ENCODE measurements at regions of chr17 and their contacts with region 1.

Region 1: GRCh38 chr17:10295728-10296343 is 77.0 kb downstream of the MYH13 start:
- DNase-seq: no peak
- H3K4me3 ChIP-seq: no peak overlapping the region
- H3K27ac ChIP-seq: no peak overlapping the region
- H3K4me1 ChIP-seq: no peaks in the 10 kb centered on the region
- H3K27me3 ChIP-seq: no peaks in the 10 kb centered on the region
- CTCF ChIP-seq: peak in 2 of 3 donors; percentile 41 to 58
- POLR2A ChIP-seq: no peak

Region 2: DNA sequence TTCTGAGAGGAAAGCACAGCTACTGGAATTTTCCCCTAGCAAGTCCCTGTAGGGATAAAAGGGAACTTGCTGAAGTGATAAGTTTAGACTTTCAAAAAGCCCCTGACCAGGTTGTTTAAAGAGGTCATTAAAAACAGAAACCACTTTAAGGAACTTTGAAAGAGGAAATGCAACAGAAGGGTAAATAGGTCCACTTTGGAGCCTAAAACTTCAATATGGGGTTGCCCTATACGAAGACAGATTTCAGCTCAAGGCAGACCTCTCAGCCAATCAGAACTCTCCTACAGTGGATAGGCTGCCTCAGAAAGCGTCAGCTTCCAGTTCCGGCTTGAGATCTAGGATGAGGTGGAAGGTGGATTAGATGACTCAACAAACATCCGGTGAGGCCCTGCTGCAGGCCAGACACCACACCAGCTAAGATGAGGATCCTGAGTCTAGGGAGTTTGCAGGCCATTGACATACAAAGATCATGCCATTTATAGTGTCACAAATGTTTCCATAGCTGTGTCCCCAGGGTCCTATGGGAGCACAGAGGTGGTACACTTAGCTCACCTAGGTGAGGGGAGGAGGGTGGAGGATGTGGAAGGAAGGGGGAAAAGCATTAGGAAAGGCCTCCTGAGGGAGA is 1488.8 kb before region 1 on chr17:
- intact Hi-C with region 1: no loop called
- DNase-seq: no peak
- H3K4me3 ChIP-seq: no peak overlapping the region
- H3K27ac ChIP-seq: no peak overlapping the region
- H3K4me1 ChIP-seq: no peaks in the 10 kb centered on the region
- H3K27me3 ChIP-seq: no peaks in the 10 kb centered on the region
- CTCF ChIP-seq: no peak
- POLR2A ChIP-seq: no peak

Region 3: DNA sequence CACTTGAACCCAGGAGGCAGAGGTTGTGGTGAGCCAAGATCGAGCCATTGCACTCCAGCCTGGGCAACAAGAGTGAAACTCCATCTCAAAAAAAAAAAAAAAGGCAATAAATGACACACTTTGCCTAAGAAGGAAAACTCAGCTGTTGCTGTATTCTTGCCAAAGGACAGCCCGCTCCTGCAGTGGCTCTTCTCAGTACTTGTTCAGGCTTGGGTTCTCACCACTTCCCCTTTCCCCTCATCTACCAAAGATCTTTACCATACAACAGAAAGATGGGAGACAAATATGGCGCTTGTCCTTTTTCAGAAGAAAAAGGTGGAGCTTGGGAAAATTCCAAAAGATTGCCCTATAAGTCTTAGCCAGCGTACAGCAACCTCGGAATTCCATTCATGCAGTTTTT is 18.5 kb after region 1 on chr17:
- intact Hi-C with region 1: loop called (anchors 1 kb)
- DNase-seq: no peak
- H3K4me3 ChIP-seq: no peak overlapping the region
- H3K27ac ChIP-seq: no peak overlapping the region
- H3K4me1 ChIP-seq: no peaks in the 10 kb centered on the region
- H3K27me3 ChIP-seq: no peaks in the 10 kb centered on the region
- CTCF ChIP-seq: no peak
- POLR2A ChIP-seq: no peak

Measured in breast epithelium (tissue), 4 donors.